CD4-positive, alpha-beta T cell (primary cell): ENCODE measurements at regions of chr2 and their contacts with region 1.

Region 1: GRCh38 chr2:169462896-169463695 is 16.2 kb upstream of the BBS5 start:
- DNase-seq: no peak
- ATAC-seq: no peak
- H3K4me3 ChIP-seq: no peak overlapping the region
- H3K4me3 Mint-ChIP-seq: no peak overlapping the region
- H3K27ac ChIP-seq: no peak overlapping the region
- H3K27ac Mint-ChIP-seq: no peak overlapping the region
- H3K4me1 ChIP-seq: no peaks in the 10 kb centered on the region
- H3K4me1 Mint-ChIP-seq: no peaks in the 10 kb centered on the region
- H3K27me3 ChIP-seq: no peaks in the 10 kb centered on the region
- H3K27me3 Mint-ChIP-seq: no peaks in the 10 kb centered on the region
- CTCF ChIP-seq: no peak

Region 2: DNA sequence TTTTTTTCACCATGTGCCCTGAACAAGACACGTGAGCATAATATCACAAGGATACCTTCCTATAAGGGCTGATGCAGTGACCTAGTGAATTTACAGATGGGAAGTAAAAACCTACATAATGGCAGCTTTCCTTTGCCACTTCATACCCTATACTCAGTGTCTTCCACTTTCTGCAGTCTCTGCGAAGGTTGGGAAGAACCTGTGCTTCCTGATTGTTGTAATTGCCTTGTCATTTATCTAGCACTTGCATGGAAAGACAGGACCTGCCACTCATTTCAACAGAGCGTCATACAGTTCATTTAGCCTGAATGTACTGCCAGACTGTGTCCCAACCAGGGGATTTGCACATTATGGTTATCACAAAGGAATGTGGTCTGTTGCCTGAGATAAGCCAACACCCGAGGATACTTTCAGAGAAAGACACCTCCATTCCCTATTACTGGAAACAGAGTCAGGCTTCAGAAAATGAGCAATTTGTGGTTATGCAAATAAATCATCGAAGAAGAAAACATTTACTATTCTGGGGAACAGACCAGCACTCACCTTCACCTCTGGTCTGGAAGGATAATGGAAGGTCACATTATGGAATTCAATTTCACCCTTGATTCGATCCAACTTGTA is 487.0 kb before region 1 on chr2:
- CTCF ChIA-PET with region 1: no interaction called
- POLR2A ChIA-PET with region 1: interaction called, 6 read pairs
- intact Hi-C with region 1: loop called in 1 of 2 experiments (anchors 10 kb)
- DNase-seq: no peak
- ATAC-seq: peak; percentile 29
- H3K4me3 ChIP-seq: no peak overlapping the region
- H3K4me3 Mint-ChIP-seq: no peak overlapping the region
- H3K27ac ChIP-seq: no peak overlapping the region
- H3K27ac Mint-ChIP-seq: no peak overlapping the region
- H3K4me1 ChIP-seq: no peaks in the 10 kb centered on the region
- H3K4me1 Mint-ChIP-seq: no peaks in the 10 kb centered on the region
- H3K27me3 ChIP-seq: no peaks in the 10 kb centered on the region
- H3K27me3 Mint-ChIP-seq: no peaks in the 10 kb centered on the region
- CTCF ChIP-seq: no peak